Lower leg skin (tissue), 4 donors: ENCODE measurements at regions of chr3 and their contacts with region 1.

Region 1: DNA sequence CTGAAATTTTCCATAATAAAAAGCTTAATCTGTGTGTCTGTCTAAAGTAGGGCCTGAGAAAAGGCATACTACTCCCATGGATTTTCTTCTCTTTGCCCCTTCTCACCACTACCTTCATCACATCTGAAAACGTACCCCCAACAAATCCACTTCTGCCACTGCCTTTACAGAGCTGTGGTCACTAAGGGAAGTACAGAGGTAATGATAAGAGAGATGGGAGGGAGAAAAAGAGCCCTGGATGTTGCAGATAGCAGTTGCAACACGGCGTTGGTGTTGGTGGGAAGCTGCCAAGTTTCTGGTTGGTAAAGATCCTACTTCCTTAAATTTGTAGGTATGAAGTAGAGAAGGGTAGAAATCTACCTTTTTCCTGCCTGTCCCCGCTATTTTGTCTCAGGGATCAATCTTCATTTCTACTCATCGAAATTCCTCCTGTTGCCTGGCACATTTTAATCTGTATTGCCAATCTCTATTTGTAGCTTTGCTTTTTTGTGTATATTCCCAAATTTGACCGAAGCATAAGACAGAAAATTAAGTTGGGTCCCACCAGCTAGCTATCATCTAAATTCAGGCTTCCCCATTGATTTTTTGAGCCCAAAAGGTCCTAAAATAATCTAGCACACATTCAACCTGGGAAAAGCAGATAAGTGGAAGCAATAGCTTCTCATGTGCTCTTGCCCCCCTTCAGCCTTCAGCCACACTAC is 102.9 kb downstream of the TFDP2 start:
- DNase-seq: no peak
- H3K4me3 ChIP-seq: no peak overlapping the region
- CTCF ChIP-seq: no peak
- POLR2A ChIP-seq: no peak

Region 2: DNA sequence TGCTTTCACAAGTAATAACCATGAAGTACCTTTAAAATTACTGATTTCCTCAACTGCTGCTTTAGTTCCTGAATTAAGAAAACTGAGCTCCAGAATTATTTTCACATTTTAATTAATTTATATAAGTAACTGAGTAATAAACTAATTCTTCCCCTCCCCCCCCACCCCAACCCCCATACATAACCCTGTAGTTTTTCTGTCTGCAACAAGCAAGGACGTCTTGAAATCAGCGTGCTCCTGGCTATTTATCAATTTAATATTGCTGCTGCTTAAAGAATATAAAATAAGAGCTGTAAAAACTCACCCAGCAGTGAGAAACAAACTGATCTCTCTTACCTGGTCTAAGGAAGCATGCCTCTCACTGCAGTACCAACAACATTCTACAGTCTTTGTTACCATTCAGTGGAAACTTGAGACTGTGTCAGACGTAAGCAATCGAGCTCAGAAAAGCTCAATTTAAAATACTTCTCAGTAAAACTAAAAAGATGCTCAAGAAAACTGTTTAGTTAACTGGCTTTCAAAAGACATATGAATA is 18.2 kb before region 1 on chr3:
- intact Hi-C with region 1: loop called (anchors 2 kb)
- DNase-seq: peak in 1 of 2 donors; percentile 30
- H3K4me3 ChIP-seq: no peak overlapping the region
- CTCF ChIP-seq: no peak
- POLR2A ChIP-seq: no peak